Activated naive CD4-positive, alpha-beta T cell treated with anti-CD3 and anti-CD28 coated beads for 36 hours (primary cell): ENCODE measurements at regions of chr14 and their contacts with region 1.

Region 1: GRCh38 chr14:51677266-51677665 is 25.6 kb downstream of the FRMD6 start:
- DNase-seq: no peak
- H3K4me3 Mint-ChIP-seq: no peak overlapping the region
- H3K27ac Mint-ChIP-seq: no peak overlapping the region
- H3K4me1 Mint-ChIP-seq: peaks cover 21% of the 10 kb centered on the region
- H3K27me3 Mint-ChIP-seq: peaks cover 8% of the 10 kb centered on the region

Region 2: GRCh38 chr14:51260225-51260624 is 417.0 kb before region 1 on chr14:
- CTCF ChIA-PET with region 1: no interaction called
- intact Hi-C with region 1: loop called (anchors 1 kb)
- DNase-seq: peak; percentile 42
- H3K4me3 Mint-ChIP-seq: no peak overlapping the region
- H3K27ac Mint-ChIP-seq: peak overlapping the region; percentile 71
- H3K4me1 Mint-ChIP-seq: peaks cover 24% of the 10 kb centered on the region
- H3K27me3 Mint-ChIP-seq: no peaks in the 10 kb centered on the region

Region 3: GRCh38 chr14:51298895-51299294 is 378.4 kb before region 1 on chr14:
- CTCF ChIA-PET with region 1: no interaction called
- intact Hi-C with region 1: loop called (anchors 2 kb)
- DNase-seq: peak; percentile 53
- H3K4me3 Mint-ChIP-seq: no peak overlapping the region
- H3K27ac Mint-ChIP-seq: no peak overlapping the region
- H3K4me1 Mint-ChIP-seq: peaks cover 12% of the 10 kb centered on the region
- H3K27me3 Mint-ChIP-seq: peaks cover 5% of the 10 kb centered on the region

Region 4: GRCh38 chr14:51593397-51593796 is 83.9 kb before region 1 on chr14:
- CTCF ChIA-PET with region 1: no interaction called
- intact Hi-C with region 1: no loop called
- DNase-seq: no peak
- H3K4me3 Mint-ChIP-seq: no peak overlapping the region
- H3K27ac Mint-ChIP-seq: no peak overlapping the region
- H3K4me1 Mint-ChIP-seq: peaks cover 6% of the 10 kb centered on the region
- H3K27me3 Mint-ChIP-seq: no peaks in the 10 kb centered on the region

Region 5: GRCh38 chr14:51666826-51667225 is 10.4 kb before region 1 on chr14:
- CTCF ChIA-PET with region 1: no interaction called
- intact Hi-C with region 1: no loop called
- DNase-seq: no peak
- H3K4me3 Mint-ChIP-seq: no peak overlapping the region
- H3K27ac Mint-ChIP-seq: no peak overlapping the region
- H3K4me1 Mint-ChIP-seq: no peaks in the 10 kb centered on the region
- H3K27me3 Mint-ChIP-seq: no peaks in the 10 kb centered on the region

Region 6: DNA sequence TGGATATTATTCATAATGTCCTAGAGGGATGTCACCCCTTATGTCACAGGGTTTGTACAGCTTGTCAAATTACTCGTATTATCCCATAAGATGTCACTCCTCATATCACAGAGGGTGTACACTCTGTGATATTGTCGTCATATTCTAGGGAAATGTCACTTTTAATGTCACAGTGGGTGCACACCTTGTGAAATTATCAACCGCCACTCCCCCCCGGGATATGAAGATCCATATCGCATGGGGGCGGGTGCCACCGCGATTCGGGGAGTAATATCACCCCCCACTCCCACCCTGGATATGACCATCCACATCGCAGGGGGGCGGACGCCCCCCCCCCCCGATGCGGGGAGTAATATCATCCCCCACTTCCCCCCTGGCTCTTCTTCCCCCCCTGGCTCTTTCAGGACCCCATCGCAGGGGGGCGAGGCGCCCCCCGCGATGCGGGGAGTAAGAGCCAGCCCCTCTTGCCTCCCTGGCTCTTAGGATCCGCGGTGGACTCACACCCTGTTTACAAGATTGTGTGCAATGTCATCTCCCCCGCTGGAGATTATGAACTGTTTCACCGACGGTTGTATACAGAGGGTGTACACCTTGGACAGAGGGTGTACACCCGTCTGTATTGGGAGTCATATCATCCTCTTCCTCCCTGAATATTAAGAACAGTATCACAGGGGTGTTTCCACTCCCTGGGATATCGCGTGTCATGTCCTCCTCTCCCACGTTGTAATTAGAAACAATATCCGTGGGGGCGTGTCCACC is 67.3 kb after region 1 on chr14:
- CTCF ChIA-PET with region 1: no interaction called
- intact Hi-C with region 1: loop called (anchors 2 kb)
- DNase-seq: peak; percentile 27
- H3K4me3 Mint-ChIP-seq: no peak overlapping the region
- H3K27ac Mint-ChIP-seq: no peak overlapping the region
- H3K4me1 Mint-ChIP-seq: no peaks in the 10 kb centered on the region
- H3K27me3 Mint-ChIP-seq: no peaks in the 10 kb centered on the region